A673 (cell line): ENCODE measurements at regions of chr20 and their contacts with region 1.

Region 1: DNA sequence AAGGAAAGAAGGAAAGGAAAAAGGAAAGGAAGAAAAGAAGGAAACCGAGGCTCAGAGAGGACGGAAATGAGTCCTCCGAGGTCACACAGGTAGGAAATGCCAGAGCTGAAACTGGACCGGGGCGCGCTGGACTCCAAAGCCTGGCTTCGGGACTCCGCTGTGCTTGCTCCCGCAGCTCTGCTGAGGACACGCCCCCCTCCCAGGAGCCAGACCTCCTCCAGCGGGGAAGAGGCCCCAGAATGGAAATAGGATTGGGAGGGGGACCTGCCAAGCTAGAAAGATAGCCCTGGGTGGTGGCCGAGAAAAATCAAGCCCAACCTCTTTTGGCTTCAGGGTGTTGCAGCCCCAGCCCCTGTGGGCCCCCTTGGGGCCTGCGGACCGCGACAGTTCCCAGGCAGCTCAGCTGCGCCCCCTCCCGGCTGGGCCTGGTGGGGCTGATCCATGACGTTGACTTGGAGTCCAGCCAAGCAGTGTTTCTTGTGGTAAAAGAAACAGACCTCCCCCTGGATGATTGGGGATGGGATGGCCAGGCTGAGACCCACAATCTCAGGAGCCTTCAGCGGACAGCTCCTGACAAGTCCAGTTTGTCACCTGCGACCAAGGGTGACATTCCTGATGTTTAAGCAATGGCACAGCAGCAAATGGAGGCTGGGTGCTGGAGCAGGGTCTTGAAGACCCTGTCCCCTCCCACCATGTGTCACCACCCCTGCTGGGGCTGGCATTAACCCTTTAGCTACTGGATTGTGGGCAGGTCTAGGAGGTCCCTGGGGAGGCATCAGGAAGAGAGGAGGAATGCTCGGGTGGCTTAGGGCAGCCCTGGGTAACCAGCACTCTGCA is 55.5 kb downstream of the RIPOR3 start:
- DNase-seq: peak; percentile 82
- H3K4me3 ChIP-seq: no peak overlapping the region
- H3K27ac ChIP-seq: peak overlapping the region; percentile 64
- H3K4me1 ChIP-seq: peaks cover 17% of the 10 kb centered on the region
- H3K27me3 ChIP-seq: no peaks in the 10 kb centered on the region
- CTCF ChIP-seq: peak; percentile 98

Region 2: GRCh38 chr20:50720026-50720425 is 84.1 kb after region 1 on chr20:
- CTCF ChIA-PET with region 1: no interaction called
- POLR2A ChIA-PET with region 1: interaction called, 17 read pairs
- intact Hi-C with region 1: no loop called
- DNase-seq: no peak
- H3K4me3 ChIP-seq: no peak overlapping the region
- H3K27ac ChIP-seq: no peak overlapping the region
- H3K4me1 ChIP-seq: peaks cover 16% of the 10 kb centered on the region
- H3K27me3 ChIP-seq: no peaks in the 10 kb centered on the region
- CTCF ChIP-seq: no peak

Region 3: GRCh38 chr20:50744143-50744792 is 108.4 kb after region 1 on chr20:
- CTCF ChIA-PET with region 1: no interaction called
- POLR2A ChIA-PET with region 1: no interaction called
- intact Hi-C with region 1: loop called (anchors 10 kb)
- DNase-seq: peak; percentile 86
- H3K4me3 ChIP-seq: no peak overlapping the region
- H3K27ac ChIP-seq: peak overlapping the region; percentile 51
- H3K4me1 ChIP-seq: peaks cover 54% of the 10 kb centered on the region
- H3K27me3 ChIP-seq: no peaks in the 10 kb centered on the region
- CTCF ChIP-seq: peak; percentile 43; the same call in 1 of the 2 replicates